ENCODE measurements at regions of chr22 and their contacts with region 1.

Region 1: GRCh38 chr22:32796865-32797573 is 4.5 kb upstream of the TIMP3 start:
- DNase-seq: peak; percentile 56 to 64
- ATAC-seq: peak; percentile 89

Region 2: DNA sequence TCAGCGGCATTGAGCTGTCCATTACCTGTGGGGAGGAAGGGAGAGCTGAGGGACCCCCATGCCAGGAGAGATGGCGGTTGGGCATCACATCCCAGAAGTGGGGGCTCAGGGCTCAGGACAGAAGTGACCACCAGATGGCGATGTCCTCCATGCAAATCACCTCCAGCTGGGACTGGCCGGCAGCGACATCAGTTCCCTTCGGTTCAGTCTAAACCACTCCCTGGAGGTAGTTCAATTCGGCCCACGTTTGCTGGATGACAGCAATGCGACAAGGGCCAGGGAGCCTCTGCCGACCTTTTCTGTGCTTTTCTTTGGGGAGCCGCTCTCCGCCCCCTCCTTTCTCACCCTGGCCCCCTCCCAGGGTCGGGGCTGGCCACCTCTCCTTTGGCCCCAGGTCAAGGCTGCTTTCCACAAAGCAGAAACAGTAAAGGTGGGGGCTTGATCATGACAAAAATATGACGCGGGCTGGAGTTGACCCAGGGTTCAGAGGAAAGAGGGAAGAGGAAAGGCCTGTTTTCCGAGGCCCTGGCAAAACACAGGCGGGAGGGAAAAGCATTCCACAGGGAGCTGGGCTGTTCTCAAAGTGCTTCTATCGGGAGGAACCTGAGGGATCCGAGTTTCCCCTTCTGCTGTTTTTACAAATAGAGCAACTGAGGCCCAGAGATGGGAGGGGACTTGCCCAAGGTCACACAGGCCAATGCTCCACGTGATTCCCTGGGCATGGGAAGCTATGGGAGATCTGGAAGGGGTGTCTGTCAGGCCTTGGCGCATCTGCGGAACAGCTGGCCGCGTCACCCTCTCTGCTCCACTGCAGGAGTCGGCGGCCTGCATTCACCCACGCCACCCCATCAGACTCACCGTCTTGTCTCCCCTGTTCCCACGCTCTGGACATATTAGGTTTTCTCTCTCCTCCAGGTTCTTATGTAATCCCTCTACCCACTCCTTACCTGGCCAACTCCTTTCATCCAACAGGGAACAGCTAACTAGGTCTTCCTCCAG is 267.7 kb before region 1 on chr22:
- intact Hi-C with region 1: loop called in 1 of 2 experiments (anchors 5 kb)
- DNase-seq: peak; percentile 82 to 88
- ATAC-seq: peak; percentile 76

Region 3: DNA sequence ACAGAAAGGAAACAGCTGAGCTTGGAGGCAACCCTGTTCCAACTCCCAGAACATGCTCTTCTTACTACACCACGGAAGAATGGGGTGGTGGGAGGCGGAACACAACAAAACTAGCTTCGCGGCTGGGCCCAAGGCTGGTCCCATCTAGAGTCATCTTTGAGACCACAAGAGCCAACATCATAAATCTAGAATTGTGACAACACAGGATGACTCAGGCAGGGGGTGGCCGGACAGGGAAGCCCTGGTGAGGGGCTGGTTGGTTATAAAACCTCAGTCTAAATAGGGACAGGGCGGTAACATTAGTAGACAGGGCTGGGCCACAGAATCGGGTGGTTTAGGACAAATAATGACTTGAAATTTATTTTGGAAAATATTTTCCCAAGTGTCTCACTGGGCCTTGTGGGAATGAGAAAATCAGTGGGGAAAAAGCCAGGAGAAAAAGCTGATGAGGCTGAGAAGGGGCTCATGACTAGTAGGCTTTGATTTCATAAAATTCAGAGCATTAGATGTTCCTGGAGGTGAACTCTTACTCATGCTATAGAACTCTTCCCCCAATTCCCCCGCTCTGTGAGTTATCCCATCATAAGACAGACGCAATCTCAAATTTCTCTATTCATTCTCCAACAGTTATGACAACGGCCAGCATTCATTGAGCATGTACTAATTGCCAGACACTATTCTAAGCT is 147.4 kb before region 1 on chr22:
- intact Hi-C with region 1: loop called in 1 of 2 experiments (anchors 10 kb)
- DNase-seq: no peak
- ATAC-seq: no peak

Region 4: GRCh38 chr22:32660292-32660691 is 136.7 kb before region 1 on chr22:
- intact Hi-C with region 1: loop called (anchors 2 to 10 kb)
- DNase-seq: peak; percentile 46 to 73
- ATAC-seq: peak; percentile 87

Region 5: DNA sequence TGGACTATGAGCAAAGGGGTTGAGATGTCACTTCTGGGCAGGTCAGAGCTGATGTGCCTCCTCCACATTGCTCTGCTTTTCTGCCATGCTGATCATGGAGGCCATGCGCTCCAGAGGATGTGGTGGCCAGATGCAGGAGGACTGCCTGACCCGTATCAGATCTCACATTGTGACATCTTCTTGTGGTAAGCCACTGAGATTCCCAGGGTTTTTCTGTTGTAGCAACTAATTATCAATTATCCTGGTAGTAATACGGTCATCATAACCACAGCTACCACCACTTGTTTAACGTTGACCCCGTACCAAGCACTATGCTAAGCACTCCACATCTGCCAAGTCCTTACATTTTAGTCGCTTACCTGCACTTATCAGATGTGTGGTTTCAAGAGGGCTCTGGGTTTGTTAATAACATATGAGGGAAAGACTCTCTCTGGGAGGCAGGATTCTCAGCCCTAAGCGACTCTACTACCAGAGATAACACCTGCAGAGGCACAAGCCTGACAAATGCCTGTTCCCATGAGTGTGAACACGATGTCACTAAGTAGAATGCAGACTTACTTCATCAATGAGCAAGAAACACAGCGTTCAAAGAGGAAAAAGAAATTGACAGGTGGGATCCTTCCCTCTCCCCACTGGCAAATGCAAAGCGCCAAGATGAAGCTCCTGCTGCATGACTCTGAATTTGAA is 59.1 kb before region 1 on chr22:
- intact Hi-C with region 1: no loop called
- DNase-seq: no peak
- ATAC-seq: no peak

Region 6: DNA sequence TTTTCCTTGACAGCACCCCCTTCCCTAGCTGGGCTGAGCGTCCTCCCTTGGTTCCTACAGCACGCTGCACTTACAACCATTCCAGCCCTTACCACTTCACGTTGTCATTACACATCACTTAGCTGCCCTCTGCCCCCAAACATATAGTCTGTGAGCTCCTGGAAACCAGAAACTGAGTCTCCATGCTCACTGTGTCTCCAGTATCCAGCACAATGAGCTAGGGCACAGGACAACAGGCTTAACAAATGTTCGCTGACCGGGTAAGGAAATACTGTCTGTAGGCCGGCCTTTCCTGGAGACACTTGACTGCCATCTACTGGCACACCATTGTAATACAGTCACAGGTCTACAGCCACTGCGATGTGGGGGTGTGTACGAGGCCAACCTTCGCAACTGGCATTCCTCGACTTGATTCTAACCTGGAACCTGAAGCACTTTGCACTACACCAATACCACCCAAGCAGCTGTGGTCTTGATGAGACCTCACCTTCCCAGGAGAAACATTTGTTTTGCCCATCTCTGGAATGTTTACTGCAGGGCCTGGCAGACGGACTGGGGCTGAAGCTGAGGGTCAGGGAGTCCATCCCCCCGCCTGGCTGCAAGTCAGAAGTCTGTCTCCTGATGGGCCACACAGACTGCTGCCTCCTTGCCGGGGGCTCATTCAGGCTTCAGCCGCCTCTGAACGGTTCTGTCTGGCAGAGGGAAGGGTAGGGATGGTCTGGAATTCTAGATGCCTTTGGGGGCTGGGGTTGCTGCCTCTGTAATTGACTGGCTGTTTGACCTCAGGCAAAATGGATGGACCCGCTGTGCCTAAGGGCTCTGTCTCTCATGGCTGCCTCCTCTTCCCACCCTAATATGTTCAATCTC is 189.1 kb after region 1 on chr22:
- intact Hi-C with region 1: loop called in 1 of 2 experiments (anchors 10 kb)
- DNase-seq: peak; percentile 51 to 53
- ATAC-seq: peak; percentile 95